Naive thymus-derived CD4-positive, alpha-beta T cell (primary cell): ENCODE measurements at regions of chr4 and their contacts with region 1.

Region 1: DNA sequence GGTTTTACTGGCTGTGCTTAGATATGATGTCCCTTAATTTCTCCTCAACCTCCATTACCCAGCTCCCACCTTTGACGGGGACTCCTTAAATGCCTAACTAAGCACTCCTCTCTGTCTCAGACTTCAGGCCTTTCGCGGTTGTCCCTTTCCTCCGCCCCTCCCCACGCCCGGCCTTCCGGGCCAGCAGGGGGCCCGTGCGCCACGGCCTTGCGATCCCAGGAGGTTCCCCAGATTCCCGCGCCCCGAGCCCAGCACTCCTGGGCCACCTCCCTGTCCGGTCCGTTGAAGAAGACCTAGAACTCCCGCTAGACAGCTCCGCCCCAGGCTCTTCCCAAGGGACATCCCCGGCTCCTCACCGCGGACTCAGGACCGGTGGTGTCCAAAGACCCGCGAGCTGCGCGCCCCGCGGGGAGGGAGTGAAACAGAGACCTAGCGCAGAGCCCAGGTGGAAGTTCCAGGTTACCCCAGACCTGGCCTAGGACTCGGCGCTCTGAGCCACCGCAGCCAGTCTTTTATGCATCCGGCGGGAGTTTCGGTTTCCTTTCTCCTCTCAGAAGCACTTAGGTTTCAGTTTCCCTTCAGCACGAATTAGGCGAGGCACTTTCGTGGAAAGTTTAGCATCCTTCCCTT is at the start of gene DDX60:
- DNase-seq: peak; percentile 54 to 89 (median 85)
- ATAC-seq: peak; percentile 95
- H3K4me3 ChIP-seq: peak within 1 kb of the TSS; percentile 88
- H3K4me3 Mint-ChIP-seq: peak within 1 kb of the TSS; percentile 84 to 99 (median 96)
- H3K27ac ChIP-seq: peak within 1 kb of the TSS; percentile 95
- H3K27ac Mint-ChIP-seq: peak within 1 kb of the TSS; percentile 96 to 99 (median 99)
- H3K4me1 ChIP-seq: peaks cover 12 to 18% of the 10 kb centered on the region in 2 donors
- H3K4me1 Mint-ChIP-seq: peaks cover 28 to 69% (median 59%) of the 10 kb centered on the region in 7 donors
- H3K27me3 ChIP-seq: no peaks in the 10 kb centered on the region
- H3K27me3 Mint-ChIP-seq: no peaks in the 10 kb centered on the region
- total RNA-seq, gene DDX60: 15.8 to 121 (median 29.0) TPM

Region 2: GRCh38 chr4:168361365-168362024 is 43.1 kb after region 1 on chr4:
- CTCF ChIA-PET with region 1: no interaction called
- POLR2A ChIA-PET with region 1: no interaction called
- intact Hi-C with region 1: loop called in 1 of 2 experiments (anchors 5 kb)
- DNase-seq: no peak
- ATAC-seq: no peak
- H3K4me3 ChIP-seq: no peak overlapping the region
- H3K4me3 Mint-ChIP-seq: no peak overlapping the region
- H3K27ac ChIP-seq: no peak overlapping the region
- H3K27ac Mint-ChIP-seq: no peak overlapping the region
- H3K4me1 ChIP-seq: no peaks in the 10 kb centered on the region
- H3K4me1 Mint-ChIP-seq: peaks cover 6 to 27% (median 10%) of the 10 kb centered on the region in 7 donors
- H3K27me3 ChIP-seq: no peaks in the 10 kb centered on the region
- H3K27me3 Mint-ChIP-seq: no peaks in the 10 kb centered on the region

Region 3: DNA sequence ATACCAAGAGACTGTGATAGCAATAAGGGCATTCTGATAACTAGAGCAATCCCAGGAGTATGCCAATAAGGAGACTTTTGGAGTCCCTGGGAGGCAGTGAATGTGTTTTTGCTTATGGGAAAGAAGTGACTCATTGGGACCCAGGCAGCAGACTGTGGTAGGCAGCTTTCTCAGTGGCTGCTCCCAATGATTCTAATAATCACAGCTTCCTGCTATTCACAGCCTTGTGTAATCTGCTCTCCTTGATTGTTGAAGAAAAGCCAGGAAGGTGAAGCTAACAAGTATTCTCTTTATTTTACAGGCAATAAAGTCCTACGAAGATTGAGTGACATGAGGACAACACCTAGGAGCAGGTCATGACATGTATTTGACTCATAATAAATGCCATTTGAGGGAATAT is 70.5 kb after region 1 on chr4:
- CTCF ChIA-PET with region 1: no interaction called
- POLR2A ChIA-PET with region 1: no interaction called
- intact Hi-C with region 1: loop called (anchors 5 kb)
- DNase-seq: no peak
- ATAC-seq: no peak
- H3K4me3 ChIP-seq: no peak overlapping the region
- H3K4me3 Mint-ChIP-seq: no peak overlapping the region
- H3K27ac ChIP-seq: no peak overlapping the region
- H3K27ac Mint-ChIP-seq: peak overlapping the region in 2 of 9 donors; percentile 49 to 78
- H3K4me1 ChIP-seq: no peaks in the 10 kb centered on the region
- H3K4me1 Mint-ChIP-seq: peaks cover 0 to 9% (median 2%) of the 10 kb centered on the region in 7 donors
- H3K27me3 ChIP-seq: no peaks in the 10 kb centered on the region
- H3K27me3 Mint-ChIP-seq: no peaks in the 10 kb centered on the region

Region 4: DNA sequence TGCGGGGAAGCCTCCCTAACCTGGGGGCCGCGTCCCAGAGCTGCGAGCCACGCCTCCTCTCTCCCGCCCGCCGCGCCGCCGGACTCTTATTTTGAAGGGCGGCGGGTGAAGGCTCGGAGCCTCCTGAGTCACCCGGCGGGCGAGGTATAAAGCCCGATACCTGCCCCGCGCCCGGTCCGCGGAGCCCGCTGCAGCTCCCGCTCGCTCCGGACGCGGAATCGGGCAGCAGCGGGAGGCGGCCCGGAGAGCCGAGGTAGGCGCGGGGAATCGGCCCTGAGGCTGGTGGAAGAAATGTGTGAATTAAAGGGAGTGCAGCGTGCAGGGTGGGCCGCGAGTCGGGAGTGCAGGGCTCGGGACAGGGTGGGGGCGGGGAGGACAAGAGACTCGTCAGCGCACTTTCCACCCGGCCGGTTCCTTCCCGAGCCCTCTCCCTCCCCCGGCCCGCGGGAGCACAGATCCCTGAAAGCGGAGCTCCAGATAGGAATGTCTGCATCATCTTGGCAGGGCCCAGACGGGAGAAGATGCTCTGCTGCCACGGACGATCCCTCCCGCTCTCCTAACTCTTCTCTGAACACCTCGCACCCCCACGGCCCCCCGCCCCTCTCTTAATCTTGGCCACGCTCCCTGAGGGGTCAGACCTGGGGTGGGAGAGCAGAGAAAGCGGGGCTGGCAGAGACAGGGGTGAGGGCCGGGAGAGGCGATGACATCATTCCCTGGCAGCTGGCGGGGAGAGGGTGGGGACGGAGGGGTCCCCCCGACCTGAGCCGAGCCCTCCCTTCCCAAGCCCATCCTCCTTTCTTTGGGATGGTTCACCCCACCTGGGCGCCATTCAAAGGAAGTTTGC is 513.8 kb after region 1 on chr4:
- CTCF ChIA-PET with region 1: no interaction called
- POLR2A ChIA-PET with region 1: no interaction called
- intact Hi-C with region 1: loop called in 1 of 2 experiments (anchors 1 kb)
- DNase-seq: peak in 8 of 9 donors; percentile 31 to 77 (median 44)
- ATAC-seq: peak; percentile 85
- H3K4me3 ChIP-seq: peak overlapping the region; percentile 45
- H3K4me3 Mint-ChIP-seq: peak overlapping the region; percentile 63 to 91 (median 84)
- H3K27ac ChIP-seq: no peak overlapping the region
- H3K27ac Mint-ChIP-seq: peak overlapping the region in 1 of 9 donors; percentile 66
- H3K4me1 ChIP-seq: peaks cover 0 to 5% of the 10 kb centered on the region in 2 donors
- H3K4me1 Mint-ChIP-seq: peaks cover 0 to 21% (median 13%) of the 10 kb centered on the region in 7 donors
- H3K27me3 ChIP-seq: peaks cover 0 to 15% of the 10 kb centered on the region in 2 donors
- H3K27me3 Mint-ChIP-seq: peaks cover 46 to 68% (median 60%) of the 10 kb centered on the region in 5 donors

Region 5: GRCh38 chr4:170027181-170027829 is 1708.9 kb after region 1 on chr4:
- CTCF ChIA-PET with region 1: no interaction called
- POLR2A ChIA-PET with region 1: no interaction called
- intact Hi-C with region 1: loop called (anchors 1 to 5 kb)
- DNase-seq: peak; percentile 76 to 92 (median 89)
- ATAC-seq: peak; percentile 83
- H3K4me3 ChIP-seq: peak overlapping the region; percentile 71
- H3K4me3 Mint-ChIP-seq: peak overlapping the region; percentile 86 to 96 (median 94)
- H3K27ac ChIP-seq: peak overlapping the region; percentile 59
- H3K27ac Mint-ChIP-seq: peak overlapping the region; percentile 65 to 89 (median 81)
- H3K4me1 ChIP-seq: peaks cover 0 to 7% of the 10 kb centered on the region in 2 donors
- H3K4me1 Mint-ChIP-seq: peaks cover 6 to 14% (median 11%) of the 10 kb centered on the region in 7 donors
- H3K27me3 ChIP-seq: no peaks in the 10 kb centered on the region
- H3K27me3 Mint-ChIP-seq: peaks cover 0 to 60% (median 8%) of the 10 kb centered on the region in 5 donors